ENCODE measurements at regions of chr1 and their contacts with region 1.

Region 1: GRCh38 chr1:225735252-225736149 is 42.1 kb upstream of the SRP9 start:
- DNase-seq: peak; percentile 100
- H3K4me3 Mint-ChIP-seq: peak overlapping the region; percentile 60
- H3K27ac Mint-ChIP-seq: peak overlapping the region; percentile 89
- H3K4me1 Mint-ChIP-seq: peaks cover 33% of the 10 kb centered on the region
- H3K27me3 Mint-ChIP-seq: no peaks in the 10 kb centered on the region
- CTCF ChIP-seq: peak; percentile 9

Region 2: GRCh38 chr1:225508538-225509375 is 226.7 kb before region 1 on chr1:
- CTCF ChIA-PET with region 1: interaction called, 4 read pairs
- POLR2A ChIA-PET with region 1: interaction called, 32 read pairs
- intact Hi-C with region 1: no loop called
- DNase-seq: peak; percentile 99
- H3K4me3 Mint-ChIP-seq: no peak overlapping the region
- H3K27ac Mint-ChIP-seq: peak overlapping the region; percentile 83
- H3K4me1 Mint-ChIP-seq: peaks cover 32% of the 10 kb centered on the region
- H3K27me3 Mint-ChIP-seq: no peaks in the 10 kb centered on the region
- CTCF ChIP-seq: no peak

Region 3: DNA sequence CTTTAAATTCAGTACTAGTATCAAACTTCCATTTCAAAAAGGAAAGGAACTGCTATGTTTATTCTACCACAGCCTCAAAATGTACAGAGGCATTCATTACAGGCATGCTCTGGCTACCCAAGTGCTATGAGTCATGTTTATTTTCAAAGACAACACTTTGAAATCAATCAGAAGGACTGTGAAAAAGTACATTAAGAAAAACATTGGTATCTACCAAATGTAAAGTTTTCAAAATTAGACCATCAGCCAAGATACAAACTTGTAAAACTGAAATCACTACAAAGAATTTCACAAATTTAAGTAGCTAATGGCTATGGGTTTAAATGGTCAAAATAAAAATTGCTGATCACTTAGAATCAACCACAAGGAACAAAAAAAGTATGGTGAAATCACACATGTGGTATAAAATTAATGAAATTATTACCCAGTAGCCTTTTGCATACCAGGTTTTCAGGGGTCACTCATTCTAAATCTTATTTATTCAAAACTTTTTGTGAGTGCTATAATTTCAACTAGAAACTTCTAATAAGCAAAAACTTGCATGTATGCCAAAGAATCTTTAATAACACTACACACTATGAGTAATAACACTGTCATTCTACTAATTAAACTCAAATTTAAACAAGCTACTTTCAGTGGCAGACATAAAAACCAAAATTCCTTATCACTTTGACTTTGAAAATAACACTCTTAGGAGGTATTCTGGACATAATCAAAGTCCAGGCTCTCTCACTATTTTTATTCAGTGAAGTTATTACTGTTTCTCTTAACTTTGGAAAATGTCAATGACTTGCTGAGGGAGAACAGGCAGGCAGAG is 131.8 kb before region 1 on chr1:
- CTCF ChIA-PET with region 1: interaction called, 3 read pairs
- POLR2A ChIA-PET with region 1: interaction called, 38 read pairs
- intact Hi-C with region 1: no loop called
- DNase-seq: peak; percentile 86
- H3K4me3 Mint-ChIP-seq: peak overlapping the region; percentile 68
- H3K27ac Mint-ChIP-seq: peak overlapping the region; percentile 95
- H3K4me1 Mint-ChIP-seq: peaks cover 61% of the 10 kb centered on the region
- H3K27me3 Mint-ChIP-seq: no peaks in the 10 kb centered on the region
- CTCF ChIP-seq: no peak

Region 4: GRCh38 chr1:225710804-225711203 is 24.7 kb before region 1 on chr1:
- CTCF ChIA-PET with region 1: interaction called, 37 read pairs
- POLR2A ChIA-PET with region 1: interaction called, 204 read pairs
- intact Hi-C with region 1: no loop called
- DNase-seq: peak; percentile 97
- H3K4me3 Mint-ChIP-seq: no peak overlapping the region
- H3K27ac Mint-ChIP-seq: peak overlapping the region; percentile 56
- H3K4me1 Mint-ChIP-seq: peaks cover 17% of the 10 kb centered on the region
- H3K27me3 Mint-ChIP-seq: no peaks in the 10 kb centered on the region
- CTCF ChIP-seq: no peak

Region 5: DNA sequence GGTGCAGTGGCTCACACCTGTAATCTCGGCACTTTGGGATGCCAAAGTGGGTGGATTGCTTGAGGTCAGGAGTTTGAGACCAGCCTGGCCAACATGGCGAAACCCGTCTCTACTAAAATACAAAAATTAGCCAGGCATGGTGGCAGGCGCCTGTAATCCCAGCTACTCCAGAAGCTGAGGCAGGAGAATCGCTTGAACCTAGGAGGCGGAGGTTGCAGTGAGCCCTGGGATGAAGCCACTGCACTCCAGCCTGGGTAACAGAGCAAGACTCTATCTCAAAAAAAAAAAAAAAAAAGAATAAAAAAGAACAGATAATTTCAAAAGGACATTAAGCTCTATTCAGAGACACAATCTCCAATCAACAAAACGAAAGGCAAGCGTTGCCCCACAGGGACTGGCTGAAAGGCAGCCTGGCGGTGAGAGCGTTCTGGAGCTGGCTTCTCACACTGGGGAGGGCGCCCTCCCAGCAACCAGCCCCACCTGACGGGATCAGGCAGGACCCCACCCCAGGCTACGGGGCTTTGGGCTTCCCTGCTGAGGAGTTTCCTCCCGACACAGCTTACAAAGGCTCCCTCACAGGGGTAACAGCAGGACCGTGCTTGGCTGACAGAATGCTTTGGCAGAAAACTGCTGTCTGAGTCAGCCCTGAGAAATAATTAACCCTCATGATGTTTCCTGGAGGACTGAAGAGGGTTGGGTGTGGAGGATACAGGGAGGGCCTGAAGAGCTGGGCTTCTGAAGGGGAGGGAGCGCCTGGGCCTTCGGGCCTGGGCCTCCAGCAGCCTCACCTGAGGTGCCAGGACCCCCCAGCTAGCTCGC is 11.1 kb after region 1 on chr1:
- CTCF ChIA-PET with region 1: interaction called, 48 read pairs
- POLR2A ChIA-PET with region 1: interaction called, 162 read pairs
- intact Hi-C with region 1: loop called (anchors 1 kb)
- DNase-seq: peak; percentile 98
- H3K4me3 Mint-ChIP-seq: peak overlapping the region; percentile 66
- H3K27ac Mint-ChIP-seq: peak overlapping the region; percentile 90
- H3K4me1 Mint-ChIP-seq: peaks cover 35% of the 10 kb centered on the region
- H3K27me3 Mint-ChIP-seq: no peaks in the 10 kb centered on the region
- CTCF ChIP-seq: no peak

Region 6: GRCh38 chr1:225817611-225818061 is 82.1 kb after region 1 on chr1:
- CTCF ChIA-PET with region 1: no interaction called
- POLR2A ChIA-PET with region 1: interaction called, 10 read pairs
- intact Hi-C with region 1: no loop called
- DNase-seq: peak; percentile 100
- H3K4me3 Mint-ChIP-seq: peak overlapping the region; percentile 6
- H3K27ac Mint-ChIP-seq: peak overlapping the region; percentile 98
- H3K4me1 Mint-ChIP-seq: peaks cover 48% of the 10 kb centered on the region
- H3K27me3 Mint-ChIP-seq: no peaks in the 10 kb centered on the region
- CTCF ChIP-seq: no peak

Region 7: DNA sequence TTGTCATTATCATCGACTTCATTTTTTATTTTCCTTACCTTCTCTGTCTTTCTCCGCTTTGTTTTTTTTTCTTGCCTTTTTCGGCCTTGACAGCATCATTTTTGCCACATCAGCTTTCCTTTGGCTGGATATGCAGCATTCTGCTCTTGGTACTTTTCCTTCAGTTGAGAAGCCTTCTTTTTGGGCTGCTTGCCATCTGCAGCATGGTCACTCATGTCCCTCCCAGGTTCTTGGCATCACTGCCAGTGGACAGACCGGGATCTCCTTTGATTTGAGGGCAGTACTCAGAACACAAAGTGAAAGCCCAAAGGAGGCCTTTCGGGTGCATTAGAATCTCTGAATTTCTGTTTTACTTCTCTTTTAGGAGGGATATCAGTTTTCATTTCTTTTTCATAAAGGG is 676.1 kb after region 1 on chr1:
- CTCF ChIA-PET with region 1: no interaction called
- POLR2A ChIA-PET with region 1: no interaction called
- intact Hi-C with region 1: no loop called
- DNase-seq: no peak
- H3K4me3 Mint-ChIP-seq: no peak overlapping the region
- H3K27ac Mint-ChIP-seq: no peak overlapping the region
- H3K4me1 Mint-ChIP-seq: peaks cover 5% of the 10 kb centered on the region
- H3K27me3 Mint-ChIP-seq: no peaks in the 10 kb centered on the region
- CTCF ChIP-seq: no peak